HEK293T (cell line): ENCODE measurements at regions of chr11 and their contacts with region 1.

Region 1: DNA sequence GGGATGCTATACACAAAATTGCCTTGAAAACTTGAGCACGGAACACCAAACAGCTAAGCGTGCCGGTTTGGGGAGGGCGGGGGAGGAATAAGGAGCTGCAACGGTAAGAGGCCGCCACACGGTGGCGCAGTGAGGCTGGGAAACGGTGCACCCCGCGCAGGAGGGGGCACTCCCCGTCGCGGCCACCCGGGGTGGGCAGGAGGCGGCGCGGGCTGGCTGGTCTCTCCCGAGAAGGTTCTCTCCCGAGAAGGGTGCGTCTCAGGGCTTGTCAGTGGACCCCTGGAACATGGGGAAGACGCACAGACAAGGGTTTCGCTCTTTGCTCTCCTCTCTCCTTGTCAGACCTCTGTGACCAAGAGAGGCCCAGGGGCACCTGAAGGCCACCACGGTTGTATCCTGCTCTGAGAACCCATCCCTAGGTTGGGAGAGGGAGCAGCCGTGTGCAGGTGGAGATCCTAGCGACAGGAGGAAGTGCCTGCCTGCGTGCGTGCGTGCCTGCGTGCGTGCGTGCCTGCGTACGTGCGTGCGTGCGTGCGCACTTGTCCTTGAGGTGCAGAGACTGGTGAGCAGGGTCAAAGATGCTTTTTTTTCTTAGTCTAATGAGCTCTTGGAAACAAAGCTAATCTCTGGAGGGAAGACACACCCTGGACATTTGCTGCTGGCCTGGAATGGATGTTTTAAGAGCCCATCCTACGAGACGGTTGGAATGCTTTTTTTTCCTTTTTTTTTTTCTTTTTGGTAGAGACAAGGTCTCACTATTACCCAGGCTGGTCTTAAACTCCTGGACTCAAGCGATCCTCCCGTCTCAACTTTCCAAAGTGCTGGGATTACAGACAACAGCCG is 18.1 kb upstream of the JAM3 start:
- DNase-seq: peak; percentile 87

Region 2: GRCh38 chr11:134040386-134041302 is 10.1 kb before region 1 on chr11:
- CTCF ChIA-PET with region 1: interaction called, 16 read pairs
- POLR2A ChIA-PET with region 1: no interaction called
- DNase-seq: no peak

Region 3: DNA sequence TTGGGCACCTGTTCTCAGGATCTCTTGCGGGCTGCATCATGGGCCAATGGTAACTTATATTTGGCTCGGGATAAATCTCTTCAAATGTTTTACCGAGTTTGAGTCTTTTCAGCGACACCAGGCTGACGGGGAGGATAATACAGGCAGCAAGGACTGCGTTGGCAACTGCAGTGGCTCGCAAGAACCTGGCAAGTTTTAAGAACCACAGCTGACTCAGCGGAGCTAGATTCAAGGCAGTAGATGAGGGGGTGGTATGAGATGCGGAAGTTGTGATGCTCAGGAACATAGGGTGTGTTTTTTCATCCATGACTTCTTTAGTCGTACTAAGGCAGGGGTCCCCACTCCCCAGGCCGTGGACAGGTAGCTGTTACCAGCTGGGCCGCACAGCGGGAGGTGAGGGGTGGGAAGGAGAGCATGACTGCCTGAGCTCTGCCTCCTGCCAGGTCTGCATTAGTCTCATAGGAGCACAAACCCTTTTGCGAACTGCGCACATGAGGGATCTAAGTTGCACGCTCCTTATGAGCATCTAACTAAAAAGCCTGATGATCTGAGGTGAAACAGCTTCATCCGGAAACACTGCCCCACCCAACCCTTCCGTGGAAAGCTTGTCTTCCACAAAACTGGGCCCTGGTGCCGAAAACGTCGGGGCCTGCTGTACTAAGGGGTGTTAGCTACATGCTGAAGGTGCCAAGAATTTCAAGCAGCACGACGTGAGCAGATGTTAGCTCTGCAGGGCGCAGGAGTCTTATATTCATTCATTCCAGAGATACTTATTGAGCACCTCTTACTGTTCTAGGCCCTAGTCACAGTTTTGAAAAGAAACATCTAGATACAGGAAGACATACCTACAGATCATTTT is 11.7 kb after region 1 on chr11:
- CTCF ChIA-PET with region 1: no interaction called
- POLR2A ChIA-PET with region 1: no interaction called
- DNase-seq: no peak